ENCODE measurements at regions of chr3 and their contacts with region 1.

Region 1: GRCh38 chr3:136042608-136043221 is 77.2 kb downstream of the PPP2R3A start:
- DNase-seq: no peak
- H3K4me3 ChIP-seq: no peak overlapping the region
- H3K27ac ChIP-seq: no peak overlapping the region
- H3K4me1 ChIP-seq: no peaks in the 10 kb centered on the region
- H3K27me3 ChIP-seq: no peaks in the 10 kb centered on the region
- CTCF ChIP-seq: peak; percentile 29 to 67 (median 52)
- POLR2A ChIP-seq: no peak

Region 2: GRCh38 chr3:135806317-135806716 is 236.4 kb before region 1 on chr3:
- intact Hi-C with region 1: no loop called
- DNase-seq: no peak
- H3K4me3 ChIP-seq: no peak overlapping the region
- H3K27ac ChIP-seq: no peak overlapping the region
- H3K4me1 ChIP-seq: no peaks in the 10 kb centered on the region
- H3K27me3 ChIP-seq: peaks cover 0 to 19% (median 0%) of the 10 kb centered on the region in 4 donors
- CTCF ChIP-seq: no peak
- POLR2A ChIP-seq: no peak

Region 3: GRCh38 chr3:135918580-135918962 is 124.1 kb before region 1 on chr3:
- intact Hi-C with region 1: loop called (anchors 10 kb)
- DNase-seq: no peak
- H3K4me3 ChIP-seq: no peak overlapping the region
- H3K27ac ChIP-seq: no peak overlapping the region
- H3K4me1 ChIP-seq: peaks cover 0 to 13% (median 5%) of the 10 kb centered on the region in 3 donors
- H3K27me3 ChIP-seq: no peaks in the 10 kb centered on the region
- CTCF ChIP-seq: peak in 5 of 6 experiments; percentile 7 to 52 (median 43)
- POLR2A ChIP-seq: no peak

Measured in esophagus squamous epithelium (tissue), 5 donors.